ENCODE measurements at regions of chr21 and their contacts with region 1.

Region 1: DNA sequence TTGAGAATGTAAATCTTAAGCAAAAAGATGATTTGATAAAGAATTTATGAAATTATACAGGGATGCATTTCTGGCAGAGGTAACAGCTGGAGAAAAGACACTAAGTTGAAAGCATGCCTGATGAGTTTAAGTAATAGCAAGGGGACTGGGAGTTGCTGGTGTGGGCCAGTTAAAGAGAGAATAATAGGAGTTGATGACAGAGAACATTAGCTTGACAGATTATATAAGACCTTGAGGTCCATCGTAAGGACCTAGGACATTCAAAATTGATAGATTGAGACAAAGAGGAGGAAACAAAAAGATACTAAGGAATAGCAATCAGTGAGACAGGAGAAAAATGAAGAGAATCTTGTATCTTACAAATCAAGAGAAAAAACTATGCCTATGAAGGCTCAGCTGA is 84.7 kb upstream of the TMPRSS15 start:
- DNase-seq: no peak

Region 2: DNA sequence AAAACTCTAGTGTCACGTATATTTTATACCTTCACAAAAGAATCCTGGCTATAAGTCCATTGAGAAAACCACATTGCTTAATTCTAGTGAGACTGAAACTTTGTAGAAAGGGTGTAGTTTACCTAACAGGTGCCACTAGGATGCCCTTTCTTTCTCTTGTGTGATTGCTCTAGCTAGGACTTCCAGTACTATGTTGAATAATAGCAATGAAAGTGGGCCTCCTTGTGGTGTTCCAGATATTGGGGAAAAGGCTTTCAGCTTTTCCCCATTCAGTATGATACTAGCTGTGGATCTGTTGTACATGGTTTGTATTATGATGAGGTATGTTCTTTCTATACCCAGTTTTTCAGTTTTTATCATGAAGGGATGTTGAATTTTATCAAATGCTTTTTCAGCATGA is 283.3 kb before region 1 on chr21:
- intact Hi-C with region 1: no loop called
- DNase-seq: no peak

Region 3: GRCh38 chr21:18228060-18228739 is 260.1 kb before region 1 on chr21:
- intact Hi-C with region 1: no loop called
- DNase-seq: no peak

Region 4: GRCh38 chr21:18443701-18444100 is 44.6 kb before region 1 on chr21:
- intact Hi-C with region 1: loop called in 1 of 2 experiments (anchors 2 kb)
- DNase-seq: no peak